RWPE1 (cell line): ENCODE measurements at regions of chr4 and their contacts with region 1.

Region 1: DNA sequence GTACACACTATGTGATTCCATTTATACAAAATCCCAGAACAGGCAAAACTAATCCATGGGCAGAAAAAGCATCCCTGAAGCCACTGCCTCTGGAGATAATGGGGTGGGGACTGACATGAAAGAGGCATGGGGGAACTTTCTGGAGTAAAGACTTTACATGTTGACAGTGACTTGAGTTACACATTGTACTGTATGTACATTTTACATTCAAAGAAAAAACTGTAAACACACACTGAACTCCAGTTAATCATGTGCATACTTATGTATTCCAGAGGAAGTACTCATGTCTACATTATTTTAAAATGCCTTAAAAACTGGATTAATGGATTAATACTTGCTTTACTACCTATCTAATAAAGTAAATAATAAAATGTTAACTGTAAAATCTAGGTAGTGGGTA is 21.6 kb downstream of the CENPU start:
- DNase-seq: no peak
- H3K27ac ChIP-seq: no peak overlapping the region
- CTCF ChIP-seq: no peak

Region 2: DNA sequence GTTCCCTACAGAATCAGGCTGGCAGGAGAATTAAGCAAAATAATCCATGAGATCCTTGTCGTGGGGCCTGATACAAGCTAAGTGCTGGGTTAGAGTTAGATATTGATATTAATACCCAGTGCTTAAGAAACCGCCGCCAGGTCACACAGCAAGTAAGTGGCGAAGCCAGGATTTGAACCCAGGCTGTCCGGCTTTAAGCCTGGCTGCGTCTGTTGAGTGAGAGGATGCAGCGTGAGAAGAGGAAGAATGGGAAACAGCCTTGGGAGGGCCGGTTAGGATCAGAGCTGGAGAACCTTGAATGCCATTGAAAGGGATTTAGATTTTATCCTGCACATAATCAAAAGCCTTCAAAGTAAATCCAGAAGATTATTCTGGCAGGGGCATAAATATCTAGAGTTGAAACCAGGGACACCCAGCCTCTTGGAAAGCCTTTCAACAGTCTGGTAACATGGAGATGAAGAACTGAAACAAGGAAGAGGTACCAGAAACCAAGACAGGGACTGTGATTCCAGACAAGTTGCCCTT is 241.2 kb after region 1 on chr4:
- CTCF ChIA-PET with region 1: no interaction called
- POLR2A ChIA-PET with region 1: interaction called, 10 read pairs
- DNase-seq: no peak
- H3K27ac ChIP-seq: no peak overlapping the region
- CTCF ChIP-seq: no peak

Region 3: GRCh38 chr4:185005216-185005819 is 293.0 kb after region 1 on chr4:
- CTCF ChIA-PET with region 1: no interaction called
- POLR2A ChIA-PET with region 1: no interaction called
- DNase-seq: peak; percentile 74
- H3K27ac ChIP-seq: no peak overlapping the region
- CTCF ChIP-seq: peak; percentile 93